AG04450 (cell line): ENCODE measurements at regions of chr21 and their contacts with region 1.

Region 1: GRCh38 chr21:27564684-27565301 is 597.9 kb upstream of the ADAMTS5 start:
- DNase-seq: peak; percentile 20
- H3K4me3 ChIP-seq: no peak overlapping the region
- H3K27ac ChIP-seq: no peak overlapping the region
- H3K27me3 ChIP-seq: no peaks in the 10 kb centered on the region
- CTCF ChIP-seq: peak; percentile 76

Region 2: DNA sequence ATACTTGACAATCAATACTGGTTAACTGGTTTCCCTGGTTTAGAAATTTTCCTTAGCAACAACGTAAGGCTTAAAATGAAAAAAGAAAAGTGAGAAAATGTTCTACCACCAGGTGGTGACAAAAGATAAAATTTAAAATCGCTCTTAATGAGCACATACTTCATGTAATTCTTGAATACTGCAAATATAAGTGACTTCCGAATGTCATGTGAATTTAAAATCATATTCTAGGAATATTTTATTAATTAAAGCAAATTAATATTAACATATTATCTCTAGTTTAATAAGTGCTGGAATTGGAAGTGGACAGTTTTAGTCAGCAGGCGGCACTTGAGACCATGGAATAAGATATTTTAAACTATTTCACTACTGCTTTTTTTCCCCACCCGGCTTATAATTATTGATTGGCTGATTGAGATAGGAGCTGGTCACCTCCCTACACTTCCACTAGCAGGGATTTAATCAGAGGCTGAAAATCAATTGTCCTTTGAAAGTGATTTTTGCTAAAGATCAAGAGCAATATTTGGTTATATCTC is 714.6 kb before region 1 on chr21:
- CTCF ChIA-PET with region 1: interaction called, 10 read pairs
- POLR2A ChIA-PET with region 1: no interaction called
- DNase-seq: no peak
- H3K4me3 ChIP-seq: no peak overlapping the region
- H3K27ac ChIP-seq: no peak overlapping the region
- H3K27me3 ChIP-seq: no peaks in the 10 kb centered on the region
- CTCF ChIP-seq: peak; percentile 58

Region 3: DNA sequence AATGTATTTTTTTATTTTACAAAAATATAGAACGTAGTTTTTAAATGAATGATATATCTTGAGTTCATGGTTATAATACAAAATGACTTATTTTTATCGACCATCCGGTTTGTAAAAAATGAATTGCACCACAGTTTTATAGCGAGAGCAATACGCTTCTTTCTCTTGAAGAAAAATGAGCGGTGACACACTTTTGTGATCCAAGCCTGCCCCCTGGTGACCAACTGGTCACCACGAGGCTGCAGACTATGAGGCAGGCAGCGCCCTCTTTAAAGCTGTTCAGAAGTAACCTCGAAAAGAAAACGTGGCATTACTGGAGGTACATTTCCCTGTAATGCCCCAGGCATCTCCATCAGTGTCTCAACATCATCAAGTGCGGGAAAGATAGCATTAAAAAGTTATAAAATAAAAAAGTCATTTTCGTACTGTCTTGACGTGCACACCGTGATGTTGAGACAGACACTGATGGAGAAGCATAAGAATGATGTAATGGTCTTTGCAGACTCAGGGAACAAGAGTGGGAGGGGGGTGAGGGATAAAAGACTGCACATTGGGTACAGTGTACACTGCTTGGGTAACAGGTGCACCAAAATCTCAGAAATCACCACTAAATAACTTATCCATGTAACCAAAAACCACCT is 136.3 kb after region 1 on chr21:
- CTCF ChIA-PET with region 1: interaction called, 11 read pairs
- POLR2A ChIA-PET with region 1: interaction called, 3 read pairs
- DNase-seq: peak; percentile 75
- H3K4me3 ChIP-seq: no peak overlapping the region
- H3K27ac ChIP-seq: no peak overlapping the region
- H3K27me3 ChIP-seq: no peaks in the 10 kb centered on the region
- CTCF ChIP-seq: peak; percentile 86

Region 4: DNA sequence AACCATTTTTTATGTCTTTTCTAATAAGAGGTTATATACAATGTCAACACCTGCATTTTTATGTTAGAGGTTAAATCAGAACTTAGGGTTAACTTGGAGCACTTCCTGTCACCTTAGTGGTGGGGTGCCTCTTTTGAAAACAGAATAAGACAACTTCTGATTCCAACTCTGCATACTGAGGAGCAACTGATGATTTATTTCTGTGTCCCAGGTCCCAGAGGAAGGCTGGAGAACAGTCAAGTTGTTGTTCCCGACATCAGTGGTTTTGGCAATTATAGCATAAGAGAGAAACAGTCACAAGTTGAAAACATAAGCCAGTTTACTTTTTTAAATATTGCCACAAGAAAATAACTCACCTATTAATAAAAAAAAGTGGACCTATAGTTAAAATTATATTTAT is 273.1 kb after region 1 on chr21:
- CTCF ChIA-PET with region 1: no interaction called
- POLR2A ChIA-PET with region 1: no interaction called
- DNase-seq: no peak
- H3K4me3 ChIP-seq: no peak overlapping the region
- H3K27ac ChIP-seq: no peak overlapping the region
- H3K27me3 ChIP-seq: no peaks in the 10 kb centered on the region
- CTCF ChIP-seq: no peak